OCI-LY7 (cell line): ENCODE measurements at regions of chr9 and their contacts with region 1.

Region 1: DNA sequence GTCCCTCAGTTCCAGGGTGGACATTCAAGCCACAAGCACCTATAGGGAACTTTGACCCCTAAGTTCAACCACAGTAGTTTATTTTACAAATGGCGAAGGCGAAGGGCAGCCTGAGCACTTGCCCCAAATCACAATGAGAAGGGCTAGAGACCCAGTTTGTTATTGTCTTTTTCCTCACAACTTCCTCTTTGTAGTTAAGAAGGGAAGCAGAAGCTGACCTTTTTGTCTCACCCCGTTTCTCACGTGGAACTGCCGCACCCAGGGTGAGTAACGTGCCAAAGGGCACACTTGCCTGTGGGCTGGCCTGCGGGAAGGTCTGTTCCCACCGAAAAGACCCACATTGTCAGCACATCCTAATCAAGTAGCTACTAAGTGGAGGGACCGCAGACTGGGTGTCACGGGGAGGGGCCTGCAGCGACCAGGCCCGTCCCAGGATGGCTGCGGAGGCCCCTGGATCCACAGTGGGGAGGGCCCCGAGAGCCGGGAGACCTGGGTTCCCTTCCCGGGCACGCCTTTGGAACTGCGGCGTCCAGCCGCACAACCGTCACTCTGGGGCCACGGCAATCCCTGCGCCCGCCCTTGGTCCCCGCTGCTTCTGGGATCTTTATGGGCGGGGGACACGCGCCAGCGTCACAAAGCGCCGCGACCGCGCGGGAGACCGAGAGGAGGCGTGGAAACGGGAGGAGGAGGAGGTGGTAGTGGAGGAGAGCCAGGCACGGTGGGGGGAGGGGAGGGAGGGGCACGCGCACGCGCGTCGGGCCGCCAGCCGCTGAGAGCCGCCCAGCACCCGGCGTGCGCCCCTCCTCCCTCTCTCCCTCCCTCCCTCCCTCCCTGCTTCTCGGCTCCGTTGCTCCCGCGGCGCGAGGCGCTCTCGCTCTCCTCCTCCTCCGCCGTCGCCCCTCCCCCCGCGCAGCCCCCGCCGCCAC is at the start of gene UBE2R2:
- DNase-seq: peak; percentile 90
- H3K4me3 ChIP-seq: peak within 1 kb of the TSS; percentile 99
- H3K27ac ChIP-seq: peak within 1 kb of the TSS; percentile 89
- H3K4me1 ChIP-seq: peaks cover 62% of the 10 kb centered on the region
- CTCF ChIP-seq: no peak
- total RNA-seq, gene UBE2R2: 10.9 and 13.7 TPM in 2 replicates

Region 2: GRCh38 chr9:33852216-33852826 is 35.7 kb after region 1 on chr9:
- CTCF ChIA-PET with region 1: interaction called, 3 read pairs
- POLR2A ChIA-PET with region 1: interaction called, 4 read pairs
- intact Hi-C with region 1: loop called (anchors 1 kb)
- DNase-seq: peak; percentile 74
- H3K4me3 ChIP-seq: no peak overlapping the region
- H3K27ac ChIP-seq: peak overlapping the region; percentile 31
- H3K4me1 ChIP-seq: peaks cover 53% of the 10 kb centered on the region
- CTCF ChIP-seq: peak; percentile 83

Region 3: DNA sequence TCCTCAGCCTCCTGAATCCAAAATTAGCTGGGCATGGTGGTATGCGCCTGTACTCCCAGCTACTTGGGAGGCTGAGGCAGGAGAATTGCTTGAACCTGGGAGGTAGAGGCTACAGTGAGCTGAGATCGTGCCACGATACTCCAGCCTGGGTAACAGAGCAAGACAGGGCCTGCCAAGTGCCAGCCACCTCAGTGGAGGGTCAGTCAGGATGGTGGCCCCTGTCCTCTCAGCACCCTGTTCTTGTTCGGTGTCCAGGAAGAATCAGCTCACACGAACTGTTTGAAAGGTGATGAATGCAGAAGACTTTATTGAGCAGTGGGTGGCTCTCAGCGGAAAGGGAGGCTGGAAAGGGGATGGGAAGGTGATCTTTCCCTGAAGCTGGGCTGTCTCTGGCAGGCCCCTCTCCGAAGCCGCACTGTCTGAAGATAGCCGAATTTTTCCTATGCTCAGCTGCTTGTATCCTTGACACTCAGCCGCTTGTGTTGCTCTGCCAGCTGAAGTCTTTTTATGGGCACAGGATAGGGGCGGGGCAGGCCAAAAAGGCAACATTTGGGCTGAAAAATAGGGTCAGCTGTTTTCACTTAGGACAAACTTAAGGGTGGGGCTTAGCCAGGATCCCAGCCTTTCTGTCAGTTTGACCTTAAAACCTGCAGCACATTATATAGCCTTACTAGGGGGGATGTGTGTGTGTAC is 51.3 kb after region 1 on chr9:
- CTCF ChIA-PET with region 1: no interaction called
- POLR2A ChIA-PET with region 1: interaction called, 3 read pairs
- intact Hi-C with region 1: loop called (anchors 2 kb)
- DNase-seq: peak; percentile 37
- H3K4me3 ChIP-seq: no peak overlapping the region
- H3K27ac ChIP-seq: peak overlapping the region; percentile 57
- H3K4me1 ChIP-seq: peaks cover 75% of the 10 kb centered on the region
- CTCF ChIP-seq: no peak

Region 4: DNA sequence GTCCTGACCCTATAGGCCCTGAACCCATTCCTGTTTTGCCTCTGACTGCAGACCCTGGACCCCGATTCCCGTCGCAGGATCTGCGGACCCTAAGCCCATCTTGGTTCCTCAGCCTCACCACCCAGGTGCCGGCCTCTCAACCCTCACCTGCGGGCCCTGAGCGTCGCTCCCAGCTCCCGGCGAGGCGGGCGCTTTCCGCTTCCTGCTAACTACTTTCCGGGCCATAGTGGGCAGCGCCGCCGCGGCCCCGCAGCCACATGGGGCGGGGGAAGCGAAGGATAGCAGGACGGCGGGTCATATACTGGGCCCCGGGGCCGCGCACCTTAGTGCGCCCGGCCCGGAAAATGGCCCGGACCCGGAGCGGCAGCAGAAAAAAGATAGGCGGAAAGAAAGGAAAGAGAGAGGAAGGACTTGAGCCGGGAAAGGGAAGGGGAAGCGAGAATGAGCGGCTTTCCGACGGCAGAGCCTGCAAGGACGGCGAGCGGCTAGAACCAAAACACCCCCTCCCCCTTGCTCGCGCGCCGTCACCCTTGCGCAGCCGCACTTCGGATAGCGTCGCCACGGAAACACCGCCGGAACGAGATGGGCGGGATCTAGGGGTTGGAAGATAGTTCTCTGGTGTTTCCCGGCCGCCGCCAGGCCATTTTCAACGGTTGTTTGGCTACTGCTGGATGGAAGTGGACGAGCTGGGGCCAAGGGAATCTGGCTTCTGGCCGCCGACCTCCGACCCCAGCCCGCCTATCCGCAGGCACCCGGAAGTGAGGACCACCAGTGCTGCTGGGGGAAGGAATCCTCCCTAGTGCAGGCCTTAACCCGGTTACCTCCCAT is 309.8 kb after region 1 on chr9 and contains the start of gene DCAF12:
- CTCF ChIA-PET with region 1: no interaction called
- POLR2A ChIA-PET with region 1: no interaction called
- intact Hi-C with region 1: loop called (anchors 10 kb)
- DNase-seq: peak; percentile 91
- H3K4me3 ChIP-seq: peak within 1 kb of the TSS; percentile 85
- H3K27ac ChIP-seq: peak within 1 kb of the TSS; percentile 81
- H3K4me1 ChIP-seq: peaks cover 49% of the 10 kb centered on the region
- CTCF ChIP-seq: no peak
- total RNA-seq, gene DCAF12: 21.9 and 31.7 TPM in 2 replicates